ENCODE measurements at regions of chr18 and their contacts with region 1.

Region 1: DNA sequence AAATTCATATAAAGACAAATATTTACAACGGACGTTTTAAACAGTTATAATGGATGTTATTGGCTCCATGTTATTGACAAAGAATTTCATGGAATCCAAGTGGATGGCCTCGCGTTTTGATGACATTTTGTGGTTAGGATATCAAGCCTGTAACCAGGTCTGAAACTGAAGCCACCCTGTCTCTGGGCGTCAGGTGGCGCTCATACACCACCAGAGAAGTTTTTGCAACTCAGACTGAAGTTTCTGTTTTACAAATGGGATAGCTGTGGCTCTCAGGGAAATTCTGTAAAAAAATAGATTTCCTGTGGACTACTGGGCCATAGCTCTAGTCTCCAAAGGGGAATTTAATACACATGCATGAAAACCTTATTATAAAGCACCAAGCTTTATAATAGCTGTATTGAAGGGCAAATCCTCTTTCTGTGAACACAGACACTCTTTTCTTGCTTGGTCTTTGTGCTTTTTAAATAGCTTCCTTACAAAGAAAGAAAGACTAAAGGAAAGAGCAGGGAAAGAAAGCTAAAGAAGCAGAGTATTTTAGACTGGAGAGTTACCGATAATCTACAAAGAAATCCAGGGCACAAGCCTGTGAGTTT is 86.7 kb downstream of the C18orf54 start:
- DNase-seq: peak in 5 of 6 donors; percentile 18 to 68 (median 29)
- ATAC-seq: peak; percentile 74 to 91 (median 88)
- H3K4me3 ChIP-seq: no peak overlapping the region
- H3K27ac ChIP-seq: no peak overlapping the region
- H3K4me1 ChIP-seq: no peaks in the 10 kb centered on the region
- H3K27me3 ChIP-seq: no peaks in the 10 kb centered on the region
- CTCF ChIP-seq: peak; percentile 35 to 62 (median 56)

Region 2: DNA sequence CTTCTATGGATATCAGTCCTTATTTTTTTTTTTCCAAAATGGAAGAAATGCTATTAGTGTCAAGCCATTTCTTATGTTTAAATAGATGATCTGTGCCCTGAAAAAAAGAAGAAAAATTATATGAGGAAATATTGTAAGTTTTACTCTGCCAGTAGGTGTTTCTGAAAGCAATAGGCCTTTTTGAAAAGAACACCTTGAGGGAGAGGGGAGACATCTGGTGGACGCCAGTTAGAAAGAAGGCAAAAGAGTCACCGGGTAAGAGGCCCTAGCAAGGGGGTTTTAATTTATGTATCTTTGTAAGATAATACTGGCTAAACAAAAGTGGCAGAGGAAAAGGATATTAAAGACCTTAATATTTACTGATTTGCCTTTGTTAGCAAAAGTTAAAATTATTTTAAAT is 202.8 kb after region 1 on chr18:
- intact Hi-C with region 1: loop called in 1 of 3 experiments (anchors 10 kb)
- DNase-seq: peak in 3 of 6 donors; percentile 3 to 32 (median 16)
- ATAC-seq: peak in 3 of 4 donors; percentile 70 to 73 (median 72)
- H3K4me3 ChIP-seq: no peak overlapping the region
- H3K27ac ChIP-seq: no peak overlapping the region
- H3K4me1 ChIP-seq: no peaks in the 10 kb centered on the region
- H3K27me3 ChIP-seq: no peaks in the 10 kb centered on the region
- CTCF ChIP-seq: peak in 3 of 4 donors; percentile 21 to 42 (median 24)

Region 3: DNA sequence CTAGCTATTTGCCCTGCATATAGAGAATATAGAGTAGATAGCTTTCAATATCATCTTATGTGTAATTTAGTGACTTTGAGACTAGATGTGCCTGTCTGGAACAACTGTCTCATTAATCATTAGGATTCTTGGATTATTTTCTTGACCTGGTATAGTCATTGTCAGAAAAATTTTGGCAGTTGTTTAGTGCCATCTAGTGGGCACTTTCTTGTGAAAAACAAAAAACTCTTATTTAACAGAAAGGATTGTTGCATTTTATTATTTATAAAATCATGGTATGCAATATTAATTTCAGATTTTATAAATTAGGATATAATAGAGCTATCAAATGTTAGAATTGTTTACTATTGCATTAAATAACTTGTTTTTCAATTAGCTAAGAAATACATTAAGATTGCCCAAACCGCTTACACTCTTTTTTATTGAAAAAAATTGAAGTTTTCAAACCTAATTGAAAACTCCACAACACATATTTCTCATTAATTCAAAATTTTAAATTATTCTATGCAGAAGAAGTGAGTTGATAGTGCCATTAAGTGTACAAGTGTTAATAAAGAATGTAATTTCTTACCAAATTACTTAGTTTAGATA is 227.0 kb after region 1 on chr18:
- intact Hi-C with region 1: loop called in 1 of 3 experiments (anchors 5 kb)
- DNase-seq: no peak
- ATAC-seq: peak in 3 of 4 donors; percentile 38 to 48 (median 47)
- H3K4me3 ChIP-seq: no peak overlapping the region
- H3K27ac ChIP-seq: no peak overlapping the region
- H3K4me1 ChIP-seq: no peaks in the 10 kb centered on the region
- H3K27me3 ChIP-seq: no peaks in the 10 kb centered on the region
- CTCF ChIP-seq: peak; percentile 24 to 55 (median 41)

Measured in pancreas (tissue), 10 donors.